A673 (cell line): ENCODE measurements at regions of chr11 and their contacts with region 1.

Region 1: GRCh38 chr11:77047007-77047927 is 13.1 kb downstream of the B3GNT6 start:
- DNase-seq: peak; percentile 97
- H3K4me3 ChIP-seq: peak overlapping the region; percentile 47
- H3K27ac ChIP-seq: peak overlapping the region; percentile 10
- H3K4me1 ChIP-seq: peaks cover 12% of the 10 kb centered on the region
- H3K27me3 ChIP-seq: no peaks in the 10 kb centered on the region
- CTCF ChIP-seq: peak; percentile 82

Region 2: DNA sequence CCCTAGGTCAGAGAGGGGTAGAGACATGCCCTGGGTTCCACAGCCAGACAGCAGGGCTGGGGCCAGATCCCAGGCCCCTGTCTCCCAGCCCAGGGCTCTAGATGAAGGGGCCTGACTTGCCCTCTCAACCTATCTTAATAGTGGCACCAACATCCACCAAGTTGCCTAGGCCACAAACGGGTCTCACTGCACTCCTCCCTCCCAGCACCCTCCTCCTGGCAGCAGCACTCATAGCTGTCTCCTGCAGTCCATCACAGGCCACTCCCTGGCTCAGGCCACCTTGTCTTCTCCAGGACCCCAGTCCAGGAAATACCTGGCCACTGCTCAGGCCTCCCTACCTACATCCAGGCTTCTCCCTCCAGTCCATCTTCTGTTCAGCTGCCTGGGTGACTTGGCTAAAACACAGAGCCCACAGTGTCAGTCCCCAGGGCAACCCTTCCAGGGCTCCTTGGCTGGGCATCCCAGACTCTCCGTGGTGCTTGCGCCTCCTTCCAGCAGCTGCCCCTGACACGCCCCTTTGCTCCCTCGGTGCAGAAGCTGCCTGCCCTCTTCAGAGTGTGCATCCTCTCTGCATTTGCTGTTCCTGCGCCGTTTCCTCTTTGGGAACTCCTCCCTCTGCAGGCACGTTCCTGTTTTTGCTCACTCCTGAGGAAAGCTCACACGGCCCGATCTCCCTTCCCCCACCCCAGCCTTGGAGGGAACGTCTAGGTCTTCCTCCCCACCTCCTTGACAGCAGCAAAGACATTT is 417.2 kb before region 1 on chr11:
- CTCF ChIA-PET with region 1: no interaction called
- POLR2A ChIA-PET with region 1: no interaction called
- intact Hi-C with region 1: no loop called
- DNase-seq: no peak
- H3K4me3 ChIP-seq: no peak overlapping the region
- H3K27ac ChIP-seq: no peak overlapping the region
- H3K4me1 ChIP-seq: no peaks in the 10 kb centered on the region
- H3K27me3 ChIP-seq: no peaks in the 10 kb centered on the region
- CTCF ChIP-seq: no peak

Region 3: DNA sequence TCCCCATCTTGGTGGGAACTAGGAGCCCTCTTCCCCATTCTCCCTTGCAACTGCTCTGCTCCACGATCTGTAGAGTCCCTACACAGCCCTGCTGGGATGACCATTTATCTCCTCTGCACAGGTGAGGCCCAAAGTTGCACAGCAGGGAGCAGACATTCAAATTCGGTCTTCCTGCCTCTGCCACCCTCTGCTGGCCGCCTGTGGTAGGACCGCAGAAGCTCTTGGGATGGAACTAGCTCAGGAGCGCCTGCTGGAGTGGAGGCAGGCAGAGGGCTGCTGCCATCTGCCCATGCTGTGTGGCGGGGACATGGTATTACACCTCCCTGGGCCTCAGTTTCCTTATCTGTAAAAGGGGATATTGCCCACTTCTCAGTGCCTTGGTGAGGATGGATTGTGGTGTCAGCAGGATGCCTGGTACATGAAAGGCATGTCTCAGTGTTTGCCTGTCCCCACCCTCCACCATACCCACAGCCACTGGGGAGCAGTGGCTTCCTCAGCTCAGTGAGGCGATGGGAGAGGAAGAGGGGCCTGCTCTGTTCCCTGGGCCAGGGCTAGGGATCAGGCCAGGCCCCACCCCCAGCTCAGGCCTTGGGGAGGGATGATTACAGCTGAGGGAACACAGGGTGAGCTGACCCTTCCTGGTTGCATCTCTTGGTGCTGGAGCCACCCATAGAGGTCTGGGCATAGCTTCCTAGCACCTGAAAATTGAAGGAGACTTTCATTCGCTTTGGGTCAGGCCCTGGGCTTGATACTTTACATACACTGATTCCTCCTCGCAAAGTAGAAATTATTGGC is 44.1 kb after region 1 on chr11:
- CTCF ChIA-PET with region 1: interaction called, 63 read pairs
- POLR2A ChIA-PET with region 1: interaction called, 3 read pairs
- intact Hi-C with region 1: loop called (anchors 1 kb)
- DNase-seq: peak; percentile 77
- H3K4me3 ChIP-seq: no peak overlapping the region
- H3K27ac ChIP-seq: no peak overlapping the region
- H3K4me1 ChIP-seq: no peaks in the 10 kb centered on the region
- H3K27me3 ChIP-seq: no peaks in the 10 kb centered on the region
- CTCF ChIP-seq: peak; percentile 97

Region 4: GRCh38 chr11:77101052-77101537 is 53.8 kb after region 1 on chr11:
- CTCF ChIA-PET with region 1: interaction called, 10 read pairs
- POLR2A ChIA-PET with region 1: no interaction called
- intact Hi-C with region 1: no loop called
- DNase-seq: peak; percentile 70
- H3K4me3 ChIP-seq: no peak overlapping the region
- H3K27ac ChIP-seq: no peak overlapping the region
- H3K4me1 ChIP-seq: no peaks in the 10 kb centered on the region
- H3K27me3 ChIP-seq: no peaks in the 10 kb centered on the region
- CTCF ChIP-seq: peak; percentile 85

Region 5: DNA sequence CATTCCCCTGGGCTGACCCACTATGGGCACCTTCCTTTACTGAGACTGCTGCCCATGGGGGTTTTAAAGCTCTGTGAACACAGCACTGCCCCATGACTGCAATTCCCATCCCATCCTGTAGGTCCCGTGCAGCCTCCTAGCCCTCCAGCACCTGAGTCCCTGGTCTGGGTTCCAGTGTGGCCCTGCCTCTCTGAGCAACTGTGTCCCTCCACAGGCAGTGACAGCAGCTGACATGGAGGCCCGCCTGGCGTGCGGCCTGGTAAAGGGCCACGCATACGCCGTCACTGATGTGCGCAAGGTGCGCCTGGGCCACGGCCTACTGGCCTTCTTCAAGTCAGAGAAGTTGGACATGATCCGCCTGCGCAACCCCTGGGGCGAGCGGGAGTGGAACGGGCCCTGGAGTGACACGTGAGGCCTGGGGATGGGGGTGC is 67.9 kb after region 1 on chr11:
- CTCF ChIA-PET with region 1: interaction called, 11 read pairs
- POLR2A ChIA-PET with region 1: no interaction called
- intact Hi-C with region 1: no loop called
- DNase-seq: no peak
- H3K4me3 ChIP-seq: no peak overlapping the region
- H3K27ac ChIP-seq: no peak overlapping the region
- H3K4me1 ChIP-seq: no peaks in the 10 kb centered on the region
- H3K27me3 ChIP-seq: no peaks in the 10 kb centered on the region
- CTCF ChIP-seq: 0 out of 2 replicates have a peak, but pooled peaks have one; percentile 24

Region 6: GRCh38 chr11:77187776-77188632 is 140.7 kb after region 1 on chr11:
- CTCF ChIA-PET with region 1: interaction called, 7 read pairs
- POLR2A ChIA-PET with region 1: no interaction called
- intact Hi-C with region 1: loop called (anchors 2 kb)
- DNase-seq: peak; percentile 82
- H3K4me3 ChIP-seq: no peak overlapping the region
- H3K27ac ChIP-seq: no peak overlapping the region
- H3K4me1 ChIP-seq: no peaks in the 10 kb centered on the region
- H3K27me3 ChIP-seq: no peaks in the 10 kb centered on the region
- CTCF ChIP-seq: peak; percentile 98

Region 7: DNA sequence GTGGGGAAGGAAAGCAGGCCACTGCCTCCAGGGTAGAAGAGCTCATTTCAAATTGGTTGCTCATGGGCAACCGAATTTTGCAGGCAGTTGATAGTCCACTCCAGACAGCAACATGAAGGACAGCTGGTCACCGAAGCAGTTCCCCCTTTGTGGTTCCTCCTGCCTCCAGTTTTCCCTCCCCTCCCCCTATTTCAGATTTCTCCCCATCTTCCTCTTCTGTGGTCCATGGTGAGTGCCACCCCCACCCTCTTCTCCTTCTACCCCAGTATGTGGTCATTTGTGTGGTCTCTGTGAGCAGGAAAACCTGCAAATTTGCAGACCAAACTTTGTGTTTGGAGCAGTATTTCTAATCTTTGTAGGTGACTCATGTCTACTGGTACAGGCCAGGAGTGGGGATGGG is 464.8 kb after region 1 on chr11:
- CTCF ChIA-PET with region 1: no interaction called
- POLR2A ChIA-PET with region 1: no interaction called
- intact Hi-C with region 1: no loop called
- DNase-seq: no peak
- H3K4me3 ChIP-seq: no peak overlapping the region
- H3K27ac ChIP-seq: no peak overlapping the region
- H3K4me1 ChIP-seq: no peaks in the 10 kb centered on the region
- H3K27me3 ChIP-seq: no peaks in the 10 kb centered on the region
- CTCF ChIP-seq: no peak